ENCODE measurements at regions of chr7 and their contacts with region 1.

Region 1: DNA sequence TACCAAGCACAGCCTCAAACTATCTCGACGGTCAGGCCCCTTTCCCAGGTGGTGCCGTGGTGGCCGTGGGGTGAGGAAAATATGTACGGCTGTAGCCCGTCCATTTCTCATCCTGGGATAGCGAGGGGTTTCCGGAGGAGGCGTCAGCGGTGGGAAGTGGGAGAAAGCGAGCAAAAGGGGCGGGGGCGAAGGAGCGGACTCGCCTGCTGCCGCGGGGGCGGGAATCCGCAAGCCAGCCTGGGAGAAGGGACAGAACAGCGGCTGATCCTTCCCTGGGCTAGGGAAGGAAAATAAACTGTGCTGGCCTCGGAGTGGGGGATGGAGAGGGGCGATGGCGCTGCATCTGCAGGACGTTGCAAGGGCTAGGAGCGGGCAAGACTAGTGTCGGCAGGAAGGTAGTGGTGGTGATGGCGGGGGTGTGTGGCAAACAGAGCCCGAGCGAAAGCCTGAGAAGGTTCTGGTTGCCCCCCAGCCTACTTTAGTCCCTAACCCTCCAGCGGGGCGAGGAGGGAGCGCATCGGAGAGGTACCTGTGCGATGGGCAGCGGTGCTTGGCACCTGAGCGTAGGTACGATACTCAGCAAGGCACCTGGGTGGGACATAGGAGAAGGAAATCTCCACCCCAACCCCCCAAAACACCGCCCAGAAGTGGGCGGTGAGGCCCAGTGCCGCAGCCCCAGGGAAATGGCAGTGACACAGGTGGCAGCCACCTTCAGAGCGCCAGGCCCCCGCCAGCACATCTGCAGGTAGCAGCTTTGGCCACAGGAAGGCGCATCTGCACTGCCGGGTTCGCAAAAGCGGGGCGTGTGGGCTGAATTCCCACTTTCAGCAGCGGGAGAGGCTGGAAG is 49.9 kb upstream of the STEAP1B start:
- DNase-seq: no peak
- H3K4me3 ChIP-seq: peak overlapping the region in 1 of 2 donors; percentile 35
- H3K27ac ChIP-seq: no peak overlapping the region
- H3K4me1 ChIP-seq: peaks cover 0 to 18% (median 10%) of the 10 kb centered on the region in 4 donors
- H3K27me3 ChIP-seq: peaks cover 0 to 29% of the 10 kb centered on the region in 2 donors
- CTCF ChIP-seq: peak; percentile 45 to 53

Region 2: DNA sequence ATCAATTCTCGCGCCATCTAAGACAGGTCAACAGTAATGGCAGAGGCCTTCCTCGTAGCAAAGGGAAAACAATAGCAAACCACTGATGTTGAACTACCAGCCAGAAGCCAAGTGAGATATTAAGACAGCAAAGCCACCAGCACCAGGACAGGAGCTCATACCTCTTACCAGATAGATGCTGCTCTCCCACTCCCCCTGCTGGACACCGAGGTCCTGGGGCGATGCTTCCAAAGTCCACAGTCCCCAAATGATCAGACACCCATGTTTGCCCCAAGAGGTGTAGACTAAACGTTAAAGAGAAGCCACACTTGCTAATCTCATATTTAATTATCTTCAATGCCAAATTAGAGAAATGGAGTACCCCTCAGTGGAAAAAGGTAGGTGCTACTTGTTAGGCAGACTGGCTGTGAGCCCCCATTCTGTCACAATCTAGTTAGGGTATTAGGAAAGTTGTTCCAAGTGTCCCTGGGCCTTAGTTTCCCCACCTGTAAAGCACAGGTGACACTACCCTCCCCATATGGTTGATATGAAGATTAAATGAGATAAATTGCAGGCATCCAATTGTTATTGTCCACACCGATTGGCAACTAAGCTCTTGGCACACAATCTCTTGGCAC is 232.8 kb after region 1 on chr7:
- intact Hi-C with region 1: loop called (anchors 5 kb)
- DNase-seq: peak; percentile 61 to 72
- H3K4me3 ChIP-seq: no peak overlapping the region
- H3K27ac ChIP-seq: no peak overlapping the region
- H3K4me1 ChIP-seq: no peaks in the 10 kb centered on the region
- H3K27me3 ChIP-seq: no peaks in the 10 kb centered on the region
- CTCF ChIP-seq: peak; percentile 61 to 65

Measured in tibial artery (tissue), 4 donors.